ENCODE measurements at regions of chr12 and their contacts with region 1.

Region 1: DNA sequence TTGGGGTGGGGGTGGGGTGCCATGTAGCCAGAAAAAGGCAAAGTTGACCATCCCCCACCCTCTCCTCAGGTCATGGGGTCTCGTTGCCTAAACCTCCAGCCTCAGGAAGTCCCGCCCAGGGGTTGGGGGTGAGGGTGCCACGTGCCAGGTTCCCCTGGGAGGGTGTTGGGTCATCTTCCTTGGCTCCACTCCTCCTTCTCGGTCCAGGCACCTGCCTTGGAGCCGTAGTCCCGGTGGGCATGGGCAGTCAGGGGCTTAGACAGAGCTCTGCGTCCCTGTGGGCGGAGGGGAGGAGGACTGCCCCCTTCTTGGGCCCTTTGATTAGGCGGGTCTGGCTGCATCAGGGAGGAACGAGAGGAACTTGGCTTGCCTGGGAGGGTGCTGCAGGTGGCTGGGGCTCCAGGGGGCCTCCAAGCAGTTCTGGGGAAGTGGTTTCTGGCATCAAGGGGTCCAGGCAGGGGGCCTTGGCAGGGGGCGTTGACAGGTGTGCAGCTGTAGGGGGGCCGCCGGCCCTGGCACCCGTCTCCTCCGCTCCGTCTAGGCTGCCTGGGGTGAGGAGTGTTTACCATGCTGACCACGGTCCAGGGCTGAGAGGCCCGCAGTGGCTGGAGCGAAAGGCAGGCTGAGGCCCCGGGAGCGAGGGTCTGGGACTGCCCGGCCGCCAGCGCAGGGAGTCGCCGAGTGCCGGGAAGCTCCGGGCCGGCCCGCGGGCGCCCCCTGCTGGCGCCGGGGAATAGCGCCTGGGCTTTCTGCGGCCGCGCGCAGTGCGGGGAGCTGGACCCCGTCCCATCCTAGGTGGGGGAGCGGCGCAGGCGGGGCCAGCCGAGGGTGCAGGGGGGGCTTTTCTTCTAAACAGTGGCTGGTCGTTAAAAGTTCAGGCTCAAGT is 7.9 kb downstream of the SETD1B start:
- DNase-seq: peak; percentile 91
- CTCF ChIP-seq: peak; percentile 87

Region 2: GRCh38 chr12:121773011-121773777 is 38.5 kb before region 1 on chr12:
- CTCF ChIA-PET with region 1: interaction called, 52 read pairs
- POLR2A ChIA-PET with region 1: no interaction called
- DNase-seq: peak; percentile 93
- CTCF ChIP-seq: peak; percentile 92

Region 3: DNA sequence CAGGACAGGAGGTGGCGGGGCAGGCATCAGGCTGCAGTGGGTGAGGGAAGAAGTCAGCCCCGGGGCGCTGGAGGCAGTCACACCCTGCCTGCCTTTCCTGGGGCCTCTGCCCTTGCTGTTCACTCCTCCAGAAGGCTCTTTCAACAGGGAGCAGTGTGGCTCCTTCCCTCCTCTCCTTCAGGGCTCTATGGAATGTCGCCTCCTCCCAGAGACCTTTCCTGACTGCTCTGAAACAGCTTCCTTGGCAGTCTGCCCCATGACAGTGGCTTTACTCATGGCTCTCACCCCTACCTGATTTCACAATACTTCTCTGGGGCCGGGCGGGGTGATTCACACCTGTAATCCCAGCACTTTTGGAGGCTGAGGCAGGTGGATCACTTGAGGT is 25.2 kb before region 1 on chr12:
- CTCF ChIA-PET with region 1: interaction called, 565 read pairs
- POLR2A ChIA-PET with region 1: interaction called, 3 read pairs
- DNase-seq: no peak
- CTCF ChIP-seq: no peak

Region 4: DNA sequence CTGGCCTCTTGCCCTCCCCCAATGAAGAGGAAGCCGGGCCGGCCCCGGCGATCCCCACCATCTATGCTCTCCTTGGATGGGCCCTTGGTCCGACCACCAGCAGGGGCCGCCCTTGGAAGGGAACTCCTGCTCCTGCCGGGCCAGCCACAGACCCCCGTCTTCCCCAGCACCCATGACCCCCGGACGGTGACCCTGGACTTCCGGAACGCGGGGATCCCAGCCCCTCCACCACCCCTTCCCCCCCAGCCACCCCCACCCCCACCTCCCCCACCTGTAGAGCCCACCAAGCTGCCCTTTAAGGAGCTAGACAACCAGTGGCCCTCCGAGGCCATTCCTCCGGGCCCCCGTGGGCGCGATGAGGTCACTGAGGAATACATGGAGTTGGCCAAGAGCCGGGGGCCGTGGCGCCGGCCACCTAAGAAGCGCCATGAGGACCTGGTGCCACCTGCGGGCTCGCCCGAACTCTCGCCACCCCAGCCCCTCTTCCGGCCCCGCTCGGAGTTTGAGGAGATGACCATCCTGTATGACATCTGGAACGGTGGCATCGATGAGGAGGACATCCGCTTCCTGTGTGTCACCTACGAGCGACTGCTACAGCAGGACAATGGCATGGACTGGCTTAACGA is 11.5 kb after region 1 on chr12:
- CTCF ChIA-PET with region 1: interaction called, 66 read pairs
- POLR2A ChIA-PET with region 1: no interaction called
- DNase-seq: no peak
- CTCF ChIP-seq: peak; percentile 19

Region 5: GRCh38 chr12:121839106-121839992 is 27.7 kb after region 1 on chr12:
- CTCF ChIA-PET with region 1: interaction called, 30 read pairs
- POLR2A ChIA-PET with region 1: interaction called, 3 read pairs
- DNase-seq: peak; percentile 100
- CTCF ChIP-seq: no peak

Region 6: DNA sequence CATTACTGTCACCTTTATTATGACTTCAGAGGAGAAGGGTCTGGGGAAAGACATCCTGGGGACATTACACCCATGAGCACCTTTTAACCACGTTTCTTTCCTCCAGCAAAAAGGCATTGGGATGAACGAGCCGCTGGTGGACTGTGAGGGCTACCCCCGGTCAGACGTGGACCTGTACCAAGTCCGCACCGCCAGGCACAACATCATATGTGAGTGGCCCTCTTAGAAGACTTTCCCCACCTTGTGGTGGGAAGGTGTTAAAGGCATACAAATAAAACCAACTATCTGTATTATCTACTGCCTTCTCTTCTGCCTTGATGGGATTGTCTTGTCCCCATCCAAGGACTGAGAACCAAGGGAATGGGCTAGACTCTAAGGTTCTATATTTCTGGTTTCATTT is 83.0 kb after region 1 on chr12:
- CTCF ChIA-PET with region 1: interaction called, 11 read pairs
- POLR2A ChIA-PET with region 1: no interaction called
- DNase-seq: no peak
- CTCF ChIP-seq: peak; percentile 18